ENCODE measurements at regions of chr1 and their contacts with region 1.

Region 1: DNA sequence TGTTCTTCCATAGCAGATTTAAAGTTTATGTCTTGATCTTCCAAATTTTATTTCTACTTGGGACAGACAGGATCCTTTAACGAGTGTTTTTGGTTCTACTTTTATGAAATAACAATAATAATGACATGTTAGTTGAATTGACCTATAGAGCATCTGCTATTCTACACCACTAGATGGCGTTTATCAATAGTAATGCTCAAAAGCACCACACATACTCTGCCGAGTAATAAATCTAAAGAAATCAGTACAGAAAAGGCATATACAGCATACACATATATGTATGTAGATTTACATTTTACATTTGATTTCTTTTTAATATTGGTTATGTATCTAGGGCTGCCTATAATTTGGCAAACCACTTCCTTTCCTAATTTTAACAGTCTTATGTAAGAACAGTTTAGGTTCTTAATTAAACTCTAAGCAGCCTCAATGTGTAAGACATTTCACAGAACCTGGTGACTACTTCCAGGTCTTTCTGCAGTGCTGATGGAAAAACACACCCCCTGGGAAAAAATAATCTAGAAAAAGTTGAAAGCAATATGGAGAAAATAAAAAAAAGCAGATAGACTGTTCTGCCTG is 5.9 kb upstream of the SIPA1L2 start:
- DNase-seq: peak; percentile 60
- H3K4me3 ChIP-seq: no peak overlapping the region
- H3K27ac ChIP-seq: no peak overlapping the region
- H3K4me1 ChIP-seq: 0 out of 4 replicates have a peak, but pooled peaks cover 0 to under 1% of the 10 kb centered on the region in 2 experiments
- H3K27me3 ChIP-seq: no peaks in the 10 kb centered on the region; the same call in 1 of the 2 replicates
- CTCF ChIP-seq: peak; percentile 90
- EP300 ChIP-seq: no peak
- RAD21 ChIP-seq: peak; percentile 87

Region 2: DNA sequence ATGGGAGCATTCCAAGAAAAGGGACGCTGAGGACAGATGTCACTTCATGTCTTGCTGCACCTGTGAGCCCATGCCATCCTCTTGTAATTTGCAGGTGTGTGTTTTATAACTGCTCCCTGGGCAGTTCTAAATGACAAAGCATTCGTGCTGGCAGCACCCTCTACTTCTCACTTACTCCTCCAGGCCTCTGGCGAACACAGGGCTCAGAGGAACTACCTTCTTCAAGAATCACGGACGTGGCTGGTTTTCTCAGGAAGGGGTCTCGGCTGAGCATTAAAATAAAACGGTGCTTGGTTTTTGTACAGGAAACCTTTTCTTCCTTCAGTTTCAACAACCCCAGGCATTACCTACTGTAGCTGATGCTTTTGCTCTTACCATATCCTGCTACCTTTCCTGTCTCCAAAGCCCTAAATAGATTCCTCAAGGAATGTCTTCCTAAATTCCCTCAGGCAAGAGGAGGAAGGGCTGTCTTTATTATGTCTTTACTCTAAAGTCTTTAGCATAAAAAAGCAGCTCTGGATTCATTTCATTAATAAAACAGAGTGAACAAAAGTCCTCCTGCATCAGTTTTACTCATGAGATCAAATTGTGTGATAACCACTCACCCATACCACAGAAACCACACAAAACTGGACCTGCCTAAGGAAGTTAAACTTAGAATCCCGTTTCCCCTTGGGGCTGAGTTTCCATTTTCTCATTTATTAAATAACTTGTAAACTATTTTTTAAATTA is 90.3 kb after region 1 on chr1:
- CTCF ChIA-PET with region 1: no interaction called
- POLR2A ChIA-PET with region 1: no interaction called
- DNase-seq: no peak
- H3K4me3 ChIP-seq: no peak overlapping the region
- H3K27ac ChIP-seq: no peak overlapping the region
- H3K4me1 ChIP-seq: no peaks in the 10 kb centered on the region
- H3K27me3 ChIP-seq: no peaks in the 10 kb centered on the region
- CTCF ChIP-seq: no peak
- EP300 ChIP-seq: no peak
- RAD21 ChIP-seq: no peak

Region 3: GRCh38 chr1:232751393-232752140 is 115.7 kb after region 1 on chr1:
- CTCF ChIA-PET with region 1: no interaction called
- POLR2A ChIA-PET with region 1: no interaction called
- DNase-seq: no peak
- H3K4me3 ChIP-seq: no peak overlapping the region
- H3K27ac ChIP-seq: no peak overlapping the region
- H3K4me1 ChIP-seq: no peaks in the 10 kb centered on the region
- H3K27me3 ChIP-seq: no peaks in the 10 kb centered on the region
- CTCF ChIP-seq: no peak
- EP300 ChIP-seq: no peak
- RAD21 ChIP-seq: no peak

Region 4: GRCh38 chr1:233025157-233025915 is 389.5 kb after region 1 on chr1:
- CTCF ChIA-PET with region 1: interaction called, 22 read pairs
- POLR2A ChIA-PET with region 1: no interaction called
- DNase-seq: peak; percentile 55
- H3K4me3 ChIP-seq: no peak overlapping the region
- H3K27ac ChIP-seq: no peak overlapping the region
- H3K4me1 ChIP-seq: no peaks in the 10 kb centered on the region
- H3K27me3 ChIP-seq: no peaks in the 10 kb centered on the region
- CTCF ChIP-seq: peak; percentile 45
- EP300 ChIP-seq: no peak
- RAD21 ChIP-seq: peak; percentile 81

Measured in SK-N-SH (cell line).